Posterior vena cava (tissue), 2 donors: ENCODE measurements at regions of chr1 and their contacts with region 1.

Region 1: GRCh38 chr1:27428316-27429028 is 36.0 kb downstream of the GPR3 start:
- DNase-seq: peak; percentile 24

Region 2: DNA sequence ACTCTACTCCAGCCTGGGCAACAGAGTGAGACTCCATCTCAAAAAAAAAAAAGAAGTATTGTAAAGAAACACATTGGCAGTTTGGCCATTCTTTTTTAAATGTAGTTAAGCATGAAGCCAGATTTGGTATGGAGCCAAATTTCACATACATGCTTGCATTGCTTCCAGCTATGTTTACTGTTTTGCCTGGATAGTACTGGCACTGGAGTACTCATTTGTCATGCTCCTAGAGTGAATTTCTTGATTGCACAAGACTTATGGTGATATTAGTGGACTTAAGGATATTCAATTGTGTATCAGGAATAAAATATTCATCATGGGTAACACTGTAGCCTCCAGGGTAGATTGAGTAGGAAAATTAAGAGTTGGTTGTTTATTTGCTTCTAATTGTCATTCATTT is 249.1 kb before region 1 on chr1:
- intact Hi-C with region 1: no loop called
- DNase-seq: no peak

Region 3: GRCh38 chr1:27237112-27237511 is 191.4 kb before region 1 on chr1:
- intact Hi-C with region 1: no loop called
- DNase-seq: no peak

Region 4: DNA sequence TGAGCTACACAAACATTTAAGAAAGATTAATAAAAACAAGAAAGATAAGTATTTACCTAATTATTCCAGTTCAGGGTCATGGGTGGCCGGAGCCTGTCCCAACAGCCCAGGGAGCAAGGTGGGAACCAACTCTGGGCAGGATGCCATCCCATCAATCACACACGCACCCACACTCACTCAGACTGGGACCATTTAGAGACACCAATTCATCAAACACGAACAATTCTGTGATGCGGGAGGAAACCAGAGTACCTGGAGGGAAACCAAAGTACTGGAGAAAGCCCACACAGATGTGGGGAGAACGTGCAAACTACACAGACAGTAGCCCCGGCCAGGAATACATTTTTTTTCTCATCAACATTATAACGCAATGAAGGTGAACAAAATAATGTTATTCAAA is 45.3 kb after region 1 on chr1:
- intact Hi-C with region 1: loop called in 1 of 2 experiments (anchors 10 kb)
- DNase-seq: no peak

Region 5: DNA sequence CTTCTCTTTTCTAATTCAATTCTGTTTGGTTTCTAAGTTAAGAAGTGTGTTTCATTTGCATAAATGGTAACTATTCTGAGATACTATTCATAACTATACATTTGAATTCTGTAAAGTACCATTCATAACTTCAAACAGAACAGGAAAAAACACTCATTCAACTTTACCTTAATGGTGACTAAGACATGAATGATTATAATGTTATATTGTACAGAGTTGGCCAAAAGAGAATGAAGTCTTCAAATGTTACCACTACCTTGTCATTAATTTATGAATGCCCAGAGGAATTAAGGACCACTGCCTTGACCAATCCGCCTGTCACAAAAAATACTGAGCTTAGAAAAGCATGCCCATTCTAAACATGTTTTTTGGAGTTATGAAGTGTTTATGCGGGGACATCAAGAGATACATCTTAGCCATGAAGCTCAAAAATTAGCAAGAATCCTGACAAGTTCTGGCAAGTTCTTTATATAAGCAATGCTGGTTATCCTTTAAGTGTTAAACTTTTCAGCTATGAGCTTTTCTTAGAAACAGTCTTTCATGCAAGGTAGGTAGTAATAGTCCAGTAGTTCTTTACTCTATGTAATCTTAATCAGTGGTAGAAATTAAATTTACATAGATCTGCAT is 53.6 kb after region 1 on chr1:
- intact Hi-C with region 1: loop called (anchors 5 to 10 kb)
- DNase-seq: no peak